ENCODE measurements at regions of chr2 and their contacts with region 1.

Region 1: GRCh38 chr2:15031745-15032240 is 399.3 kb downstream of the LRATD1 start:
- DNase-seq: no peak
- ATAC-seq: no peak
- H3K4me3 ChIP-seq: no peak overlapping the region
- H3K27ac ChIP-seq: no peak overlapping the region
- H3K4me1 ChIP-seq: no peaks in the 10 kb centered on the region
- H3K27me3 ChIP-seq: no peaks in the 10 kb centered on the region
- CTCF ChIP-seq: no peak

Region 2: DNA sequence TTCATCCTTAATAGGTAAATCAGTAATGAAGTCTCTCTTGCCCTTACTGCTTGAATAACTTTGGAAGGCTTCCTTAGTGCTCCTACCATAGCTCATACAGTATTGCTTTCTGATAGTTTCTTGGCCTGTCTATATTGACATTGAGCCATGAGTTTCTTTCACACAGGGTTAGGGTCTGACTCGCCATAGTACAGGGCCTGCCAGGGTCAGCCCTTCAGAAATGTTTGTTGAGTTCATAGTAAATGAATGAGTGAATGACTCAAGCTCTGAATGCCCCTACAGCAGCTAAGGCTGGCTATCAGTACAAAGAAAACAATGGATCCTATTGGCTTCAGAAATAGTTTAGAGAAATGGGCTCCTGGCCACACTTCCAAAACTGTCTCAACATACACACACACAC is 464.2 kb before region 1 on chr2:
- CTCF ChIA-PET with region 1: no interaction called
- POLR2A ChIA-PET with region 1: interaction called, 11 read pairs
- in situ Hi-C with region 1: no loop called
- intact Hi-C with region 1: no loop called
- DNase-seq: no peak
- ATAC-seq: no peak
- H3K4me3 ChIP-seq: no peak overlapping the region
- H3K27ac ChIP-seq: no peak overlapping the region
- H3K4me1 ChIP-seq: peaks cover 2% of the 10 kb centered on the region; the same call in 1 of the 2 replicates
- H3K27me3 ChIP-seq: no peaks in the 10 kb centered on the region
- CTCF ChIP-seq: no peak

Region 3: GRCh38 chr2:15069149-15069548 is 37.4 kb after region 1 on chr2:
- CTCF ChIA-PET with region 1: no interaction called
- POLR2A ChIA-PET with region 1: no interaction called
- in situ Hi-C with region 1: no loop called
- intact Hi-C with region 1: loop called (anchors 5 kb)
- DNase-seq: no peak
- ATAC-seq: no peak
- H3K4me3 ChIP-seq: no peak overlapping the region
- H3K27ac ChIP-seq: no peak overlapping the region
- H3K4me1 ChIP-seq: no peaks in the 10 kb centered on the region
- H3K27me3 ChIP-seq: no peaks in the 10 kb centered on the region
- CTCF ChIP-seq: no peak

Measured in Panc1 (cell line).